Activated CD4-positive, alpha-beta T cell treated with anti-CD3 and anti-CD28 coated beads for 36 hours (primary cell): ENCODE measurements at regions of chr11 and their contacts with region 1.

Region 1: GRCh38 chr11:2885676-2886081 is at the start of gene CDKN1C:
- DNase-seq: peak; percentile 87
- ATAC-seq: peak; percentile 85
- H3K4me3 Mint-ChIP-seq: peak within 1 kb of the TSS; percentile 67
- H3K27ac Mint-ChIP-seq: no peak within 1 kb of the TSS
- H3K4me1 Mint-ChIP-seq: peaks cover 4% of the 10 kb centered on the region
- H3K27me3 Mint-ChIP-seq: peaks cover 5% of the 10 kb centered on the region
- total RNA-seq, gene CDKN1C: 0.21 to 0.53 TPM

Region 2: DNA sequence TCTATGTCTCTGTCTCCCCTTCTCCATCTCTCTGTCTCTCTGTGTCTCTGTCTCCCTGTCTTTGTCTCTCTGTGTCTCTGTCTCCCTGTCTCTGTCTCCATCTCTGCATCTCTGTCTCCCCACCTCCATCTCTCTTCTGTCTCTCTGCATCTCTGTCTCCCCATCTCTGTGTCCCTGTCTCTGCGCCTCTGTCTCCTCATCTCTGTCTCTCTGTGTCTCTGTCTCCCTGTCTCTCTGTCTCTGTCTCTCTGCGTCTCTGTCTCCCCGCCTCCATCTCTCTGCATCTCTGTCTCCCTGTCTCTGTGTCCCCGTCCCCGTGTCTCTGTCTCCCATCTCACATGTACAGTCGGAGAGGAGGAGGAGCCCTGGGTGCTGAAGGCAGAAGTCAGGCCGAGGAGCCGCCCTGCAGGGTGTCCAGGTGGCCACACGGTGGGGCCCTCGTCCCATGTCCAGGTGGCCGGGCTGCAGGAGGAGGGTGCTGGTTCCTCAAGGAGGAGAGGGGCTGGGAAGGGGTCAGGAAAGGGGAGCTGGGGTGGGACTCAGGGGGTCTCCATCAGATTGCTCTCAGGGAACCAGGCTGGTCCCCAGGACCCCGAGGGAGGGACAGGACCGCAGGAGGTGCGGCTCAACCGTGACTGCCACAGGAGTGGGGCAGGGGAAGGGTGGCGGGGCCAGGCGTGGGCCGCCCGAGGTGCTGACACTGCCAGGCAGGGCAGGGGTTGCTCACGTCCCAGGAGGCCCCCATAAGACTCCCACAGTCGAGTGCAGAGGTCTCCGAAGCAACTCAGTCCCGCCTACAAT is 688.5 kb before region 1 on chr11:
- CTCF ChIA-PET with region 1: no interaction called
- POLR2A ChIA-PET with region 1: no interaction called
- intact Hi-C with region 1: loop called in 1 of 2 experiments (anchors 5 kb)
- DNase-seq: peak; percentile 89
- ATAC-seq: peak; percentile 98
- H3K4me3 Mint-ChIP-seq: no peak overlapping the region
- H3K27ac Mint-ChIP-seq: no peak overlapping the region
- H3K4me1 Mint-ChIP-seq: no peaks in the 10 kb centered on the region
- H3K27me3 Mint-ChIP-seq: peaks cover 8% of the 10 kb centered on the region

Region 3: GRCh38 chr11:2377511-2378443 is 507.9 kb before region 1 on chr11:
- CTCF ChIA-PET with region 1: no interaction called
- POLR2A ChIA-PET with region 1: no interaction called
- intact Hi-C with region 1: loop called in 1 of 2 experiments (anchors 1 kb)
- DNase-seq: peak; percentile 80
- ATAC-seq: peak; percentile 57
- H3K4me3 Mint-ChIP-seq: peak overlapping the region; percentile 86
- H3K27ac Mint-ChIP-seq: peak overlapping the region; percentile 75
- H3K4me1 Mint-ChIP-seq: peaks cover 28% of the 10 kb centered on the region
- H3K27me3 Mint-ChIP-seq: no peaks in the 10 kb centered on the region

Region 4: GRCh38 chr11:2428322-2428795 is 457.3 kb before region 1 on chr11:
- CTCF ChIA-PET with region 1: interaction called, 4 read pairs
- POLR2A ChIA-PET with region 1: no interaction called
- intact Hi-C with region 1: loop called in 1 of 2 experiments (anchors 1 kb)
- DNase-seq: peak; percentile 93
- ATAC-seq: peak; percentile 96
- H3K4me3 Mint-ChIP-seq: no peak overlapping the region
- H3K27ac Mint-ChIP-seq: no peak overlapping the region
- H3K4me1 Mint-ChIP-seq: no peaks in the 10 kb centered on the region
- H3K27me3 Mint-ChIP-seq: no peaks in the 10 kb centered on the region

Region 5: GRCh38 chr11:2444821-2445745 is 440.6 kb before region 1 on chr11 and contains the start of gene KCNQ1:
- CTCF ChIA-PET with region 1: no interaction called
- POLR2A ChIA-PET with region 1: no interaction called
- intact Hi-C with region 1: loop called (anchors 1 to 5 kb)
- DNase-seq: peak; percentile 63
- ATAC-seq: peak; percentile 63
- H3K4me3 Mint-ChIP-seq: peak within 1 kb of the TSS; percentile 86
- H3K27ac Mint-ChIP-seq: peak within 1 kb of the TSS; percentile 71
- H3K4me1 Mint-ChIP-seq: peaks cover 38% of the 10 kb centered on the region
- H3K27me3 Mint-ChIP-seq: no peaks in the 10 kb centered on the region
- total RNA-seq, gene KCNQ1: 9.1 to 10.9 TPM

Region 6: GRCh38 chr11:2699531-2700414 is 185.9 kb before region 1 on chr11 and contains the start of gene KCNQ1OT1:
- CTCF ChIA-PET with region 1: no interaction called
- POLR2A ChIA-PET with region 1: interaction called, 3 read pairs
- intact Hi-C with region 1: loop called in 1 of 2 experiments (anchors 1 kb)
- DNase-seq: peak; percentile 91
- ATAC-seq: peak; percentile 98
- H3K4me3 Mint-ChIP-seq: peak within 1 kb of the TSS; percentile 79
- H3K27ac Mint-ChIP-seq: peak within 1 kb of the TSS; percentile 28
- H3K4me1 Mint-ChIP-seq: peaks cover 8% of the 10 kb centered on the region
- H3K27me3 Mint-ChIP-seq: no peaks in the 10 kb centered on the region
- total RNA-seq, gene KCNQ1OT1: 0.16 TPM

Region 7: DNA sequence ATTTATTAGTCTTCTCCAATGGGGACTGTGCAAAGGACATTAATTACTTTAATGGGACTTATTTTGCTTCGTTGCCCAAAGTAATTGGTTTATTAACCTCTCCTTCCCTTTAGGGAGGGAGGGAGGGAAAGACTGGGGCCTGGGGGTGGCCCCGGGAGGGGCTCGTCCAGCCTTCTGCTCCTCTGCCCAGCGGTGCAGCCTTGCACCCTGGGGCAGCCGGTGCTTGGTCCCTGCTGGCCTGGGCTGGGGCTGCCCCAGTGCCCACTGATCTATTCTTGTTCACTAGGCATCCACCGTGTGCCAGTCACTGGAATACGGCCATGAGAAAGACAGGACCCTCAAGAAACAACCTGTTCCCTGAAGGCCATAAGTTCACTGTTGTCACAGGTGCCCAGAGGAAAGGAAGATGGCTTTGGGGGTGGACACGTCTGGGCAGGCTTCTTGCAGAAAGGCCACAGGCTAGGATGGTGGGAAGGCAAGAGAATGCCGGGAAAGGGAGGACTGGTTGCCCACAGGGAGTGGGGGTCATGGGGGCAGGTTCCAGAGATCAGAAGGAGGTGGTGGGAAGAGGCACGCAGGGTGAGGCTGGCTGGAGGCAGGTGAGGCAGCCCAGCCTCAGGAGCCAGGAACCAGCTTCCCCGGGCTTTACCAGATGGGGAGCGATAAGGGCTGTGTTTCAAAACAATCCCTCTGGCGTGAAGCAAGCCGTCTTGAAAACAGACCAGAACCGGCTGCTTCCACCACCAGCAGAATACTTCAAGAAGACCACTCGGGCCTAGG is 138.2 kb before region 1 on chr11:
- CTCF ChIA-PET with region 1: no interaction called
- POLR2A ChIA-PET with region 1: no interaction called
- intact Hi-C with region 1: no loop called
- DNase-seq: no peak
- ATAC-seq: no peak
- H3K4me3 Mint-ChIP-seq: no peak overlapping the region
- H3K27ac Mint-ChIP-seq: no peak overlapping the region
- H3K4me1 Mint-ChIP-seq: no peaks in the 10 kb centered on the region
- H3K27me3 Mint-ChIP-seq: no peaks in the 10 kb centered on the region

Region 8: GRCh38 chr11:2901854-2902783 is 16.4 kb after region 1 on chr11:
- CTCF ChIA-PET with region 1: interaction called, 28 read pairs
- POLR2A ChIA-PET with region 1: no interaction called
- intact Hi-C with region 1: loop called in 1 of 2 experiments (anchors 1 kb)
- DNase-seq: peak; percentile 98
- ATAC-seq: peak; percentile 96
- H3K4me3 Mint-ChIP-seq: peak overlapping the region; percentile 64
- H3K27ac Mint-ChIP-seq: peak overlapping the region; percentile 22
- H3K4me1 Mint-ChIP-seq: peaks cover 33% of the 10 kb centered on the region
- H3K27me3 Mint-ChIP-seq: no peaks in the 10 kb centered on the region